HepG2 (cell line): ENCODE measurements at regions of chr17 and their contacts with region 1.

Region 1: GRCh38 chr17:43846221-43846712 is 709 bp upstream of the CD300LG start:
- DNase-seq: peak; percentile 61
- ATAC-seq: peak; percentile 96
- H3K4me3 ChIP-seq: no peak overlapping the region
- H3K27ac ChIP-seq: no peak overlapping the region
- H3K4me1 ChIP-seq: peaks cover 8% of the 10 kb centered on the region
- H3K27me3 ChIP-seq: peaks cover 4 to 38% of the 10 kb centered on the region in 2 experiments
- CTCF ChIP-seq: peak; percentile 98
- EP300 ChIP-seq: no peak
- POLR2A ChIP-seq: no peak
- RAD21 ChIP-seq: peak; percentile 92

Region 2: GRCh38 chr17:43694077-43694870 is 152.0 kb before region 1 on chr17:
- CTCF ChIA-PET with region 1: interaction called, 18 read pairs
- POLR2A ChIA-PET with region 1: no interaction called
- in situ Hi-C with region 1: no loop called
- intact Hi-C with region 1: loop called (anchors 1 kb)
- DNase-seq: peak; percentile 85
- ATAC-seq: peak; percentile 86
- H3K4me3 ChIP-seq: no peak overlapping the region
- H3K27ac ChIP-seq: no peak overlapping the region
- H3K4me1 ChIP-seq: peaks cover 33% of the 10 kb centered on the region
- H3K27me3 ChIP-seq: peaks cover 11 to 31% of the 10 kb centered on the region in 2 experiments
- CTCF ChIP-seq: peak; percentile 96
- EP300 ChIP-seq: no peak
- POLR2A ChIP-seq: no peak
- RAD21 ChIP-seq: peak; percentile 98

Region 3: DNA sequence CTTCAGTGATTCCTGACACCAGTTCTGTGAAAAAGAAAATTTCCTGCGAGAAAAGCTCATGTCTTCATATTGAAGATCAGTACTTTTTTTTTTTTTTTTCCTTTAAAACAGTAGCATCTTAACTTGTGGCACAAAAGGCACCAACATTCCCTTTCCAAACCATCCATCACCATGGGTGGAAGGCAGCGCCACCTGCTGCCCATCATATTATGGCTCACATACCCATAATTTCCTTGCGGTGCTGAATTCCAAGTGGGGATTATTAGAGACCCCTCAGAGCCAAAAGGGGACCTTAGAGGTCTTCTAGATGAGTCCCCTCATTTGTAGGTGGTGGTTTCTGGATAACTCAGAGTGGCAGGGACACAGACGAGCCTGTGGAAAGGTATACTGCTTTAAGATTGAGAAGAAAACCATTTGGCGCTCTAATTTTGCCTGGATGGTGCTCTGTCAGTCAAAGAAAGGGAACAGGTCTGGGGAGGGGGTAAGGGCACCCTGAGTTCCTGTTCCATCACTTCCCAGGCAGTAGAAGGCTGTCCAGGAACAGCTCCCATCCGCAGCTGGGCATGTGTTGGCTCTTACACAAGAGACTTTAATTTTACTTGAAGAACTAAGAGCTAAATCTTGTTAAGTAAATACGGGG is 79.7 kb before region 1 on chr17:
- CTCF ChIA-PET with region 1: interaction called, 16 read pairs
- POLR2A ChIA-PET with region 1: interaction called, 5 read pairs
- in situ Hi-C with region 1: no loop called
- intact Hi-C with region 1: loop called (anchors 1 kb)
- DNase-seq: peak; percentile 58
- ATAC-seq: peak; percentile 40; the same call in 2 of the 3 replicates
- H3K4me3 ChIP-seq: no peak overlapping the region
- H3K27ac ChIP-seq: no peak overlapping the region
- H3K4me1 ChIP-seq: peaks cover 6% of the 10 kb centered on the region
- H3K27me3 ChIP-seq: no peaks in the 10 kb centered on the region
- CTCF ChIP-seq: peak; percentile 85
- EP300 ChIP-seq: no peak
- POLR2A ChIP-seq: no peak
- RAD21 ChIP-seq: no peak

Region 4: DNA sequence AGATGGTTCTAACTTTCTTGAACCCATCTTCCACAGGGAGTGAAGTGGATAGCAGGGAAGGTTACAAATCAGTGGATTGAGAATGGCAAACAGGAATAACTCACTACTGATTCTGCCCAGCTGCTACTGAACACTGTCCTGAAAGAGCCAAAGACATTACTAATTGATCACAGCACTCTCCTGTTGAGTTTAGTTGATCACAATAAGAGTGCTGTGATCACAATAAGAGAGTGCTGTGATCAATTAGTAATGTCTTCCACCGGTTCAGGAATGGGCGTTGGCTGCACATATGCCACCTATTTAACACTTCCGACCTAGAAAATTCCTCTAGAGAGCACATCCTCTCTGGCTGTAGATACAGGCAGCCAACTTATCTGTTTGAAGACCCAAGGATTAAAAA is 54.7 kb before region 1 on chr17:
- CTCF ChIA-PET with region 1: interaction called, 31 read pairs
- POLR2A ChIA-PET with region 1: interaction called, 3 read pairs
- in situ Hi-C with region 1: loop called (anchors 5 kb)
- intact Hi-C with region 1: loop called (anchors 1 kb)
- DNase-seq: peak; percentile 66
- ATAC-seq: peak; percentile 65
- H3K4me3 ChIP-seq: no peak overlapping the region
- H3K27ac ChIP-seq: no peak overlapping the region
- H3K4me1 ChIP-seq: peaks cover 18% of the 10 kb centered on the region; the same call in 1 of the 2 replicates
- H3K27me3 ChIP-seq: no peaks in the 10 kb centered on the region
- CTCF ChIP-seq: no peak
- EP300 ChIP-seq: no peak
- POLR2A ChIP-seq: no peak
- RAD21 ChIP-seq: no peak